RWPE1 (cell line): ENCODE measurements at regions of chr2 and their contacts with region 1.

Region 1: DNA sequence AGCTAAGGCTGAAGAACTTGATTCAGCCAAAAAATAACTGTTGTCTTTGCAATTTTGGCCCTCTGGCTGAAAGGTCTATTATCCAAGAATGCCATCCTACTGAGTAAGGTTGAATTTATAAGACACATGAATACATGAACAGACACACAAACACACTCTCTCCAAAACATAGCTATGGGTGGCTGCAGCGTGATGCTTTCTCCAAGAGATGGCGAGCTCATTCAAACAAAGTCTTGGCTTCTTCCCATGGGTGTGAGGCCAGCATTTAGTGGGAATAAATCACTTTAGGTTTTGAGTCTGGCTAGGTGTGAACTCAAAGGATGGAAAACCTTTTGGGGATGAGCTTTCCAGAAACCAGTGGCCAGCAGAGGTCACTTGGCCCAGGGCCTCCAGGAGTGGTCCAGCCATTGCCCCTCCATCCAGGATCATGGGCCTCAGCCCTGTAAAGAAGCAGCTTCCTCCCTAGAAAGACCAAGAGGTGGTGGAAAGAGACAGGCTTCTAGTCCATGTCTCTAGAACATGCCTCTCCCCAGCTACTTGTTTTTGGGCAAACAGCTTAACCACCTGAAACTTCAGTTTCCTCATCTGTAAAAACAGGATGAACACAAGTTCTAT is 11.0 kb upstream of the OSR1 start:
- DNase-seq: no peak
- H3K27ac ChIP-seq: no peak overlapping the region
- CTCF ChIP-seq: no peak

Region 2: GRCh38 chr2:19667085-19667484 is 297.6 kb after region 1 on chr2:
- CTCF ChIA-PET with region 1: interaction called, 10 read pairs
- POLR2A ChIA-PET with region 1: no interaction called
- DNase-seq: peak; percentile 51
- H3K27ac ChIP-seq: no peak overlapping the region
- CTCF ChIP-seq: peak; percentile 55